Uterus (tissue), 4 donors: ENCODE measurements at regions of chr19 and their contacts with region 1.

Region 1: DNA sequence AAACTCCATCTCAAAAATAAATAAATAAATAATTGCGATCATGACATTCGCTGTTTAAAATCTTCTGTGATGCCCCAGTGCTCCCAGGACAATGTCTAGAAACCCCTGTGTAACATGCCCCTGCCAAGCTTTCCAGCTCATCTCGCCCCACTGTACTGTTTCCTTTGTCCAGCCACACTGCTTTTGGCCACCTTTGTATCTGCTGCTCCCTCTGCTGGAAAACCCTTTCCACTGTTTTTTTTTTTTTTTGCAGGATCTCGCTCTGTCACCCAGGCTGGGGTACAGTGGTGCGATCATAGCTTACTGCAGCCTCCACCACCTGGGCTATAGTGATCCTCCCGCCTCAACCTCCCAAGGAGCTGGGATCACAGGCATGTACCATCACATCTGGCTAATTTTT is 7.5 kb downstream of the PLAUR start:
- DNase-seq: no peak
- H3K4me3 ChIP-seq: no peak overlapping the region
- H3K27ac ChIP-seq: no peak overlapping the region
- H3K4me1 ChIP-seq: peaks cover 0 to 2% of the 10 kb centered on the region in 2 donors
- H3K27me3 ChIP-seq: no peaks in the 10 kb centered on the region
- CTCF ChIP-seq: no peak
- POLR2A ChIP-seq: no peak

Region 2: GRCh38 chr19:43619262-43620060 is 43.0 kb before region 1 on chr19 and contains the start of gene ZNF428:
- intact Hi-C with region 1: loop called (anchors 5 kb)
- DNase-seq: peak; percentile 85 to 88
- H3K4me3 ChIP-seq: peak within 1 kb of the TSS; percentile 87 to 88
- H3K27ac ChIP-seq: peak within 1 kb of the TSS; percentile 91 to 94
- H3K4me1 ChIP-seq: peaks cover 0 to 5% of the 10 kb centered on the region in 2 donors
- H3K27me3 ChIP-seq: no peaks in the 10 kb centered on the region
- CTCF ChIP-seq: peak in 2 of 4 experiments; percentile 3 to 23
- POLR2A ChIP-seq: peak; percentile 62 to 89
- total RNA-seq, gene ZNF428: 1.5 to 83.3 (median 44.5) TPM